Endothelial cell of umbilical vein (primary cell): ENCODE measurements at regions of chr16 and their contacts with region 1.

Region 1: GRCh38 chr16:27515874-27516353 is 33.8 kb downstream of the GTF3C1 start:
- DNase-seq: peak; percentile 17
- H3K4me3 ChIP-seq: no peak overlapping the region
- H3K27ac ChIP-seq: no peak overlapping the region
- H3K4me1 ChIP-seq: peaks cover 4% of the 10 kb centered on the region
- H3K27me3 ChIP-seq: no peaks in the 10 kb centered on the region
- CTCF ChIP-seq: peak; percentile 64 to 73
- POLR2A ChIP-seq: no peak

Region 2: GRCh38 chr16:27222249-27223225 is 293.4 kb before region 1 on chr16:
- CTCF ChIA-PET with region 1: no interaction called
- POLR2A ChIA-PET with region 1: no interaction called
- dilution Hi-C with region 1: no loop called
- intact Hi-C with region 1: no loop called
- DNase-seq: no peak
- H3K4me3 ChIP-seq: no peak overlapping the region
- H3K27ac ChIP-seq: no peak overlapping the region
- H3K4me1 ChIP-seq: no peaks in the 10 kb centered on the region
- H3K27me3 ChIP-seq: no peaks in the 10 kb centered on the region
- CTCF ChIP-seq: no peak
- POLR2A ChIP-seq: no peak

Region 3: GRCh38 chr16:27526180-27526579 is 10.3 kb after region 1 on chr16:
- CTCF ChIA-PET with region 1: interaction called, 15 read pairs
- POLR2A ChIA-PET with region 1: no interaction called
- dilution Hi-C with region 1: no loop called
- intact Hi-C with region 1: no loop called
- DNase-seq: no peak
- H3K4me3 ChIP-seq: no peak overlapping the region
- H3K27ac ChIP-seq: no peak overlapping the region
- H3K4me1 ChIP-seq: peaks cover 3% of the 10 kb centered on the region
- H3K27me3 ChIP-seq: no peaks in the 10 kb centered on the region
- CTCF ChIP-seq: no peak
- POLR2A ChIP-seq: no peak

Region 4: DNA sequence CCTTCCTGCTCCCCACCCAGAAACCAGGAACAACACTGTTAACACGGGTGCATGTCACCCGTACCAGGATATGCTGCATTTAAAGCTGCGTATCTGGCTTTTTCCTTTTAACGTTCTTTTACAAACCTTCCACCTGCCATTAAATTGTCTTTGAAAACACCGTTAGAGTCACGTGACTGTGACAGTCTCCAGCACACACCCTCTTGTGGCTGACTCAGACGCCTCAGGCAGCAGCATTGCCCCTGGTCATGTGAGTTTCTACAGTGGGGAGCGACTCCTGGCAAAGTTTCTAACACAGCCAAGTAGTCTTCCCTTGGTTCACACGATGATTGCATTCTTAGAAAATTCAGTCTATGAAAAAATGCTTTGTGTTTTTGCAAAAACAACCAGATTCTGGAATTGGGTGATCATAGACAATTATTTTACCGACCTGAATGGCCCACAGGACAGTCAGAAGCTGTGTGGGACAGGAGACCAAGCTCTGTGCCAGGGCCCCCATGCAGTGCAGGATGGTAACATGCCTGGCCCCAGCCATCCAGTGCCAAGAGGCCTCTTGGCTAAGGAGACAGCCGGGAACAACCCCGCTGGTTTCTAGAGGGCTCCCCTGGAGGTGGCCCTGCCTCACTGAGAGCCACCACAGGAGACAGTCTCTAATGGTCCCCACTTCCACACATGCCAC is 233.1 kb after region 1 on chr16:
- CTCF ChIA-PET with region 1: no interaction called
- POLR2A ChIA-PET with region 1: no interaction called
- dilution Hi-C with region 1: no loop called
- intact Hi-C with region 1: no loop called
- DNase-seq: peak; percentile 62
- H3K4me3 ChIP-seq: no peak overlapping the region
- H3K27ac ChIP-seq: no peak overlapping the region
- H3K4me1 ChIP-seq: no peaks in the 10 kb centered on the region
- H3K27me3 ChIP-seq: no peaks in the 10 kb centered on the region
- CTCF ChIP-seq: peak; percentile 9 to 45
- POLR2A ChIP-seq: no peak

Region 5: GRCh38 chr16:27795992-27796614 is 280.2 kb after region 1 on chr16:
- CTCF ChIA-PET with region 1: no interaction called
- POLR2A ChIA-PET with region 1: no interaction called
- dilution Hi-C with region 1: no loop called
- intact Hi-C with region 1: no loop called
- DNase-seq: peak; percentile 8
- H3K4me3 ChIP-seq: no peak overlapping the region
- H3K27ac ChIP-seq: no peak overlapping the region
- H3K4me1 ChIP-seq: no peaks in the 10 kb centered on the region
- H3K27me3 ChIP-seq: no peaks in the 10 kb centered on the region
- CTCF ChIP-seq: no peak
- POLR2A ChIP-seq: no peak